Heart right ventricle (tissue), 16 donors: ENCODE measurements at regions of chr5 and their contacts with region 1.

Region 1: GRCh38 chr5:159864885-159865691 is 51.2 kb upstream of the ADRA1B start:
- DNase-seq: no peak
- ATAC-seq: peak in 5 of 8 donors; percentile 16 to 55 (median 37)
- H3K4me3 ChIP-seq: peak overlapping the region in 9 of 10 donors; percentile 1 to 45 (median 29)
- H3K27ac ChIP-seq: peak overlapping the region in 4 of 10 donors; percentile 1 to 48 (median 28)
- H3K4me1 ChIP-seq: peaks cover 0 to 4% (median 0%) of the 10 kb centered on the region in 9 donors
- H3K27me3 ChIP-seq: peaks cover 0 to 7% (median 5%) of the 10 kb centered on the region in 7 donors
- CTCF ChIP-seq: no peak

Region 2: DNA sequence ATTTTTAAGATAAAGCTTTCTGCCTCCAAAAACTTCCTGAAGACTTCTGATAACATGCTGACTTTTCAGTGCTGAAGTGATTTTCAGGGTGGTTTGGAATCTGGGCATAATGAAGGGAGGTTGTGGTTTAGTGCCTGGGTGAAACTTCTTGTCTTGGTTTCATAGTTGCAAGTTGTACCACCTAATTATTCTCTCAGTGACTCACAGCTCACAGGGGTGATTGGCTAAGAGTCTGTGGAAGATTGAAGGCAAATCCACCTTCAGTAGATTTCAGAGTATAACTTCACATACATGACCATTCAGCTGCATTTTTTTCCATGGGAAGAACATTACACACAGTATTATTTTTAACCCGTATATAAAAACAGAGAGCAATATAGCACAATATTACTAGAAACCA is 756.4 kb after region 1 on chr5:
- intact Hi-C with region 1: loop called in 1 of 10 experiments (anchors 5 kb)
- DNase-seq: no peak
- ATAC-seq: no peak
- H3K4me3 ChIP-seq: no peak overlapping the region
- H3K27ac ChIP-seq: no peak overlapping the region
- H3K4me1 ChIP-seq: no peaks in the 10 kb centered on the region
- H3K27me3 ChIP-seq: peaks cover 0 to 6% (median 0%) of the 10 kb centered on the region in 7 donors
- CTCF ChIP-seq: no peak